ENCODE measurements at regions of chrX and their contacts with region 1.

Region 1: DNA sequence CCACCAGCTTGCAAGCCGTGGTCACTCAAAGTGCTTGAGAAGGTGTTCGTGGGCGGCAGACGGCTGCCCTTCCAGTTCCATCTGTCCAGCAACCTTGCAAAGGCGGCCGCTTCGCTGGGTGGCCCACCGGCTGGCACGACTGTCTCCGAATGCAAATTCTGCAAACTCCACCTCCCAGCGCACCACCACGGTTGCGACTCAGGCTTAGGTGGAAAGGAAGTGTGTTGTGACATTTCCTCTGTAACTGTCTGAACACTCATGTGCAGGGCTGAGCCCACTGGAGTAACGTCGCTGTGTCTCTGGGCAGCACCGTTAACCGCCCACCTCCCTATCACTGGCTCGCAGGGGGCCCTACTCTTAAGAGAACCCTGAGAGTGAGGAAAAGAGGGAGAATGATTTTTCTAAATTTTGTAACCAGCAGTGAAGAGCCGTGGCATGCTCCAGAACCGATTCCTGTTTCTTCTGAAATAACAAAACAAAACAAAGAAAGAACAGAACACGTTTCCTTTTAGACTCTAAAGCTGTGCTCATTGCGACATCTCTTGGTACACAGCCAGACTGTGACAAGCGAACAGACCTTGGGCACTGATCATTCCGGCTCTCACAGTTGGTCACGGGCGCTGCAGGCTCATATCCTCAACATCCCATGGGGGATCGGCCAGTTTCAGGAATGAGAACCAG is at the start of gene P2RY8:
- DNase-seq: peak; percentile 72
- ATAC-seq: peak; percentile 76
- H3K4me3 Mint-ChIP-seq: peak within 1 kb of the TSS; percentile 98
- H3K27ac Mint-ChIP-seq: peak within 1 kb of the TSS; percentile 96
- H3K4me1 Mint-ChIP-seq: peaks cover 20% of the 10 kb centered on the region
- H3K27me3 Mint-ChIP-seq: no peaks in the 10 kb centered on the region
- CTCF ChIP-seq: no peak
- total RNA-seq, gene P2RY8: 315 and 332 TPM in 2 replicates

Region 2: DNA sequence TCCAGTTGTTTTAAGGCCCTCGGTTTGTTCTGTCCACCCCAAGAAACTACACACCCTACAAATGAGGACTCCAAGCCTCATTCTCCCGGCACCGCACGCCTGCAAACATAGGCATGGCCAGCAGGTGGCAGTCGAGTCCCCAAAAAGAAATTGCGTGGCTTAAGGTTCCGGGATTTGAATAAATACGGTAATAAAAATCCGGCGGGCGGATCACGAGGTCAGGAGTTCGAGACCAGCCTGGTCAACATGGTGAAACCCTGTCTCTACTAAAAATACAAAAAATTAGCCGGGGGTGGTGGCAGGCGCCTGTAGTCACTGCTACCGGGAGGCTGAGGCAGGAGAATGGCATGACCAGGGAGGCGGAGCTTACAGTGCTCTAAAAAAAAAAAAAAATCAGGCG is 290.4 kb before region 1 on chrX:
- CTCF ChIA-PET with region 1: no interaction called
- POLR2A ChIA-PET with region 1: no interaction called
- intact Hi-C with region 1: loop called (anchors 5 kb)
- DNase-seq: peak; percentile 71
- ATAC-seq: peak; percentile 65
- H3K4me3 Mint-ChIP-seq: no peak overlapping the region
- H3K27ac Mint-ChIP-seq: no peak overlapping the region
- H3K4me1 Mint-ChIP-seq: peaks cover 22% of the 10 kb centered on the region
- H3K27me3 Mint-ChIP-seq: peaks cover 5% of the 10 kb centered on the region
- CTCF ChIP-seq: no peak

Region 3: DNA sequence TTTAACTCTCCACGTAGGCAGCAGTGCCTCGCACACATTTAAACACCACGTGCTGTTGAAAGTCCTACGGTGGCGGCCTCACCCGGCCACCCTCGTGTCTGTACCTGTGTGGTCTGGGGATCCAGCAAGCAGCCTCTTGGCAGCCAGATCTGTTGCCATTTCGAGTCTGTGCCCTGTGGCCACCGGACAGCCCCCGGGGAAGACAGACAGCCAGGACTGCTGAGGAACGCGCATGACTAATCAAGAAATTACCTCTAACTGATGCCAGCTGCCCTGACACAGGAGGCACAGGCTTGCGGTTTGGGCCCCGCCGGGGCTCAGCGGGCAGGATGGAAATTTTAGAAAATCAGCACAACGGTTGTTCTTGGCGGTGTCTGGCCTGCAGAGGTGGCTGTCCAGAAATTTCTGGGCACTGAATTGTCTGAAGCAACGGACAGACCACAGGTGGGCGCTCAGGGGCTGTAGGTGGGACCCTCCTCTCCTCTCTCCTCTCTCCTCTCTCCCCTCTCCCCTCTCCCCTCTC is 68.9 kb before region 1 on chrX:
- CTCF ChIA-PET with region 1: no interaction called
- POLR2A ChIA-PET with region 1: no interaction called
- intact Hi-C with region 1: loop called (anchors 1 kb)
- DNase-seq: peak; percentile 71
- ATAC-seq: peak; percentile 78
- H3K4me3 Mint-ChIP-seq: peak overlapping the region; percentile 73
- H3K27ac Mint-ChIP-seq: peak overlapping the region; percentile 96
- H3K4me1 Mint-ChIP-seq: peaks cover 88% of the 10 kb centered on the region
- H3K27me3 Mint-ChIP-seq: no peaks in the 10 kb centered on the region
- CTCF ChIP-seq: no peak

Region 4: GRCh38 chrX:1491851-1492349 is 45.3 kb before region 1 on chrX:
- CTCF ChIA-PET with region 1: no interaction called
- POLR2A ChIA-PET with region 1: no interaction called
- intact Hi-C with region 1: loop called (anchors 1 kb)
- DNase-seq: peak; percentile 61
- ATAC-seq: peak; percentile 66
- H3K4me3 Mint-ChIP-seq: peak overlapping the region; percentile 88
- H3K27ac Mint-ChIP-seq: peak overlapping the region; percentile 88
- H3K4me1 Mint-ChIP-seq: peaks cover 69% of the 10 kb centered on the region
- H3K27me3 Mint-ChIP-seq: no peaks in the 10 kb centered on the region
- CTCF ChIP-seq: no peak

Region 5: GRCh38 chrX:1507511-1508463 is 29.4 kb before region 1 on chrX:
- CTCF ChIA-PET with region 1: no interaction called
- POLR2A ChIA-PET with region 1: no interaction called
- intact Hi-C with region 1: loop called (anchors 1 kb)
- DNase-seq: peak; percentile 66
- ATAC-seq: peak; percentile 77
- H3K4me3 Mint-ChIP-seq: no peak overlapping the region
- H3K27ac Mint-ChIP-seq: no peak overlapping the region
- H3K4me1 Mint-ChIP-seq: peaks cover 15% of the 10 kb centered on the region
- H3K27me3 Mint-ChIP-seq: no peaks in the 10 kb centered on the region
- CTCF ChIP-seq: no peak

Region 6: DNA sequence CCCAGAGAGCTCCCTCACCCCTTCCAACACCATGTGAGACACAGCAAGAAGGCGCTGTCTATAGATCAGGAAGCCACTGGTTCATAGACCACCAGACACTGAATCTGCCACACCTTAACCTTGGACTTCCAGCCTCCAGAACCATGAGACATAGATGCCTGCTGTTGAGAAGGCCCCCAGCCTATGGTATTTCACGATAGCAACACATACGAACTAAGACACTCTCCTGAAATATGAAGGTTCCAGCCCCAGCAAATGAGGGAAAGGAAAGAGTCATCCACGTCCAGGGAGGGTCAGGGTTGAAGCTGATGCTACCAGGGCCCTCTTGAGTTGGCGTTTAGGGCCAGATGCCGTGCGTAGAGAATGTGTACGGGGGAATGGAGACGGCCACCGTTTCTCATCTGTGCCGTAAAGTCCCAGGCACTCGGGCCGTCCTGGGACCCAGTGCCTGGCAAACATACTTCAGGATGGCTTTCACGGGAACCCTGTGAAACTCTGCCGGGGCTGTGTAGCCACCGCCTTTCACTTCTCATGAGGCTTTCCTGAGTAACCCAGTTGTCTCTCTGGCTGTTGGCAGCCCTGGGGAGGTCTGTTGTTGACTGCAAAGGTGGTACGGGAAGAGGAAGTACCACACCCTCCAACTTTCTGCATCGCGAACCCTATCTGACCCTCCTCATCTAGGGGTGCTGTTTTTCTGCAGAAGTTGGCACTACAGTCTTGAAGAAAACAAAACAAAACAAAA is 17.5 kb after region 1 on chrX:
- CTCF ChIA-PET with region 1: no interaction called
- POLR2A ChIA-PET with region 1: no interaction called
- intact Hi-C with region 1: loop called (anchors 1 kb)
- DNase-seq: peak; percentile 38
- ATAC-seq: peak; percentile 95
- H3K4me3 Mint-ChIP-seq: peak overlapping the region; percentile 72
- H3K27ac Mint-ChIP-seq: peak overlapping the region; percentile 93
- H3K4me1 Mint-ChIP-seq: peaks cover 60% of the 10 kb centered on the region
- H3K27me3 Mint-ChIP-seq: no peaks in the 10 kb centered on the region
- CTCF ChIP-seq: no peak

Region 7: DNA sequence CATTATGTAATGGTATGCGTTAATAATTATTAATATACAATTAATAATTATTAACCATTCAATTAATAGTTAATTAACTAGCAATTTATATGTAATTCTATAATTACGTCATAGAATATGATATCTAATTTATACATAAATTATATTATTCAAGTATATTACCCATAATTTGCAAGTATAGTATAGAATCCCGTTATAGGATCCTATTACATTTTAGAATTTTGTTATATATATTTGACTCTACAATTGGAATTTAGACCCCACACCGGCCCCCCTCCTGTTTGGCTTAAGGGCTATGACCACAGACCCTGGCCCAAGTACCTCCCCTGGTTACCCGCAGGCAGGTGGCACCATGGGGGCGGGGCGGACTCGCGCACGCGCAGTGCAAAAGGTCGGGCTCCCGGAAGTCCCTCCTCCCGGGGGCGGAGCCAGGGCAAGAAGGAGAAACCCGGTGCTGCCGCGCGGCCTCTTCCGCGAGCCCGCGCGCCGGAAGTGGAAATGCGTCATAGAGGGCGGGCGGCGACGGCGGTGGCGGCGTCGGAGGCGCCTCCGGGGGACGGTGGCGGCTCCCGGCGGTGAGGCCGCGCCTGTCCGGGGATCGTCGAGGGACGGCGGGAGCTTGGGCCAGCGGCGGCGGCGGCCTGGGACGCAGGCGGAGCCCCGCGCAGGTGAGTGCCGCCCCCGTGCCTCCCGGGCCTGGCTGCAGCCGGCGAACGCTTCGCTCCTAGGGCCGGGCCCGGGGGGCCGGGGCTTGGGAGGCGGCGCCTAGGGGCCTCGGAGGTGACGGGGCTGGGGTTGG is 54.1 kb after region 1 on chrX and contains the start of gene AKAP17A:
- CTCF ChIA-PET with region 1: no interaction called
- POLR2A ChIA-PET with region 1: no interaction called
- intact Hi-C with region 1: loop called (anchors 2 kb)
- DNase-seq: peak; percentile 100
- ATAC-seq: peak; percentile 84
- H3K4me3 Mint-ChIP-seq: peak within 1 kb of the TSS; percentile 91
- H3K27ac Mint-ChIP-seq: peak within 1 kb of the TSS; percentile 83
- H3K4me1 Mint-ChIP-seq: peaks cover 51% of the 10 kb centered on the region
- H3K27me3 Mint-ChIP-seq: no peaks in the 10 kb centered on the region
- CTCF ChIP-seq: no peak
- total RNA-seq, gene AKAP17A: 75.7 and 84.7 TPM in 2 replicates